ENCODE measurements at regions of chr4 and their contacts with region 1.

Region 1: GRCh38 chr4:64715741-64716140 is 306.5 kb upstream of the TECRL start:
- DNase-seq: no peak
- H3K4me3 ChIP-seq: no peak overlapping the region
- CTCF ChIP-seq: no peak
- POLR2A ChIP-seq: no peak

Region 2: GRCh38 chr4:64682946-64683345 is 32.8 kb before region 1 on chr4:
- intact Hi-C with region 1: loop called (anchors 2 kb)
- DNase-seq: no peak
- H3K4me3 ChIP-seq: no peak overlapping the region
- CTCF ChIP-seq: no peak
- POLR2A ChIP-seq: no peak